Psoas muscle (tissue), 8 donors: ENCODE measurements at regions of chr14 and their contacts with region 1.

Region 1: DNA sequence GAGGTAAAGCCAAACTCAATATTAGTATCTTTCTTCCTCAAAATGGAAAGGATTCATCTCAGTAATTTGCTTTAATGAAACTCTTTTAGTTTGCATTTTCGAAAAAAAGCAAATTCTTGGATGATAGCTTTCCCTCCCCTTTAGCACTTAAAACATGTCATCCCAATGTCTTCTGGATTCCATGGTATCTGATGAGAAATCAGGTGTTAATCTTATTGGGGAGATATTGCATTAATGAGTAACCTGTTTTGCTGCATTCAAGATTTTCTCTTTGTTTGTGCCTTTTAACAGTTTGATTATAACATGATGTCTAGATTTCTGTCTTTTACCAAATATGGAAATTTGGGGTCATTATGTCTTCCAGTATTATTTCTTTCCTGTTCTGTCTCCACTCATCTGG is 405.1 kb upstream of the FOXG1 start:
- DNase-seq: no peak
- ATAC-seq: no peak
- H3K4me3 ChIP-seq: no peak overlapping the region
- H3K27ac ChIP-seq: no peak overlapping the region
- H3K4me1 ChIP-seq: no peaks in the 10 kb centered on the region
- H3K27me3 ChIP-seq: no peaks in the 10 kb centered on the region
- CTCF ChIP-seq: no peak

Region 2: DNA sequence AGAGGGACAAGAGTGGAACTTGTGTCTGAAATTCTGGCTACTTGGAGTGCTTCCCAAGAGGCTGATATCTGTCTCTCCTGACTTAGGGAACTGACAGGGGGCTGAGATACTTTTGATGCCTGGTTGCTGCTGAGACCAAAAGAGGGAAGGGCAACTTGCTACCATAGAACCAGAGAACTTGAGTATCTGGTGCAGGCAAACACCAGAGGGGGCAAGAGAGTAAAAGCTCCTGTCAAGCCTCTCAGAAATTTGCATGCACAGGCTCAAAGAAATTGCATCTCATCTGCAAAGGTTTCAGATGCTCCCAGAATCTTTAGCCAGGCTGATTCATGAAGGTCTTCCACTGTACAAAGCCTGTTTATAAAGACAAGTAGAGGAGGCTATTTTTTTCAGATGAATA is 13.8 kb after region 1 on chr14:
- intact Hi-C with region 1: loop called in 1 of 2 experiments (anchors 2 kb)
- DNase-seq: no peak
- ATAC-seq: no peak
- H3K4me3 ChIP-seq: no peak overlapping the region
- H3K27ac ChIP-seq: no peak overlapping the region
- H3K4me1 ChIP-seq: no peaks in the 10 kb centered on the region
- H3K27me3 ChIP-seq: no peaks in the 10 kb centered on the region
- CTCF ChIP-seq: no peak